SK-N-SH (cell line): ENCODE measurements at regions of chr10 and their contacts with region 1.

Region 1: GRCh38 chr10:78047314-78047891 is 13.7 kb downstream of the RPS24 start:
- DNase-seq: peak; percentile 80
- H3K4me3 ChIP-seq: no peak overlapping the region; a peak in 1 of 4 replicates
- H3K27ac ChIP-seq: peak overlapping the region in 1 of 2 experiments; percentile 70; a peak in 2 of 4 replicates
- H3K4me1 ChIP-seq: peaks cover 22 to 26% of the 10 kb centered on the region in 2 experiments; a peak in 3 of 4 replicates
- H3K27me3 ChIP-seq: no peaks in the 10 kb centered on the region
- CTCF ChIP-seq: peak; percentile 94
- EP300 ChIP-seq: peak in 1 of 2 experiments; percentile 57; a peak in 1 of 4 replicates
- RAD21 ChIP-seq: peak; percentile 100

Region 2: GRCh38 chr10:77970869-77971803 is 76.3 kb before region 1 on chr10:
- CTCF ChIA-PET with region 1: no interaction called
- POLR2A ChIA-PET with region 1: no interaction called
- DNase-seq: peak; percentile 68
- H3K4me3 ChIP-seq: peak overlapping the region in 1 of 2 experiments; percentile 13; a peak in 1 of 4 replicates
- H3K27ac ChIP-seq: peak overlapping the region; percentile 82 to 87
- H3K4me1 ChIP-seq: peaks cover 10 to 16% of the 10 kb centered on the region in 2 experiments; a peak in 3 of 4 replicates
- H3K27me3 ChIP-seq: no peaks in the 10 kb centered on the region
- CTCF ChIP-seq: no peak
- EP300 ChIP-seq: peak; percentile 36 to 38; a peak in 2 of 4 replicates
- RAD21 ChIP-seq: peak; percentile 23

Region 3: DNA sequence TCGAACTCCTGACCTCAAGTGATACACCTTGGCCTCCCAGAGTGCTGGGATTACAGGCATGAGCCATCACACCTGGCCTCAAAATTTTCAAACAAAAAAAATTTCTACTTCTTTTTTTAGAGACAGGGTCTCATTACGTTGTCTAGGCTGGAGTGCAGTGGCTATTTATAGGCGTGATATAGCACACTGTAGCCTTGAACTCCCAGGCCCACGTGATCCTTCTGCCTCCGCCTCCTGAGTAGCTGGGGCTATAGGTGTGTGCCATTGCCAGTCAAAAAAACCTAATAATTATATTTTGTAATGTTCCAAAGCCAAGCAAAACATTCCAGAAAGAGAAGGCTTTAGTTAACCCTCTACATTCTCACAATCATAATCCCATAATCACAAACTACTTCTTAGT is 31.9 kb before region 1 on chr10:
- CTCF ChIA-PET with region 1: no interaction called
- POLR2A ChIA-PET with region 1: no interaction called
- DNase-seq: no peak
- H3K4me3 ChIP-seq: no peak overlapping the region
- H3K27ac ChIP-seq: no peak overlapping the region
- H3K4me1 ChIP-seq: no peaks in the 10 kb centered on the region
- H3K27me3 ChIP-seq: no peaks in the 10 kb centered on the region
- CTCF ChIP-seq: no peak
- EP300 ChIP-seq: no peak
- RAD21 ChIP-seq: no peak

Region 4: GRCh38 chr10:78071140-78071856 is 23.9 kb after region 1 on chr10:
- CTCF ChIA-PET with region 1: interaction called, 19 read pairs
- POLR2A ChIA-PET with region 1: no interaction called
- DNase-seq: no peak
- H3K4me3 ChIP-seq: no peak overlapping the region
- H3K27ac ChIP-seq: no peak overlapping the region
- H3K4me1 ChIP-seq: no peaks in the 10 kb centered on the region
- H3K27me3 ChIP-seq: no peaks in the 10 kb centered on the region
- CTCF ChIP-seq: no peak
- EP300 ChIP-seq: no peak
- RAD21 ChIP-seq: no peak

Region 5: DNA sequence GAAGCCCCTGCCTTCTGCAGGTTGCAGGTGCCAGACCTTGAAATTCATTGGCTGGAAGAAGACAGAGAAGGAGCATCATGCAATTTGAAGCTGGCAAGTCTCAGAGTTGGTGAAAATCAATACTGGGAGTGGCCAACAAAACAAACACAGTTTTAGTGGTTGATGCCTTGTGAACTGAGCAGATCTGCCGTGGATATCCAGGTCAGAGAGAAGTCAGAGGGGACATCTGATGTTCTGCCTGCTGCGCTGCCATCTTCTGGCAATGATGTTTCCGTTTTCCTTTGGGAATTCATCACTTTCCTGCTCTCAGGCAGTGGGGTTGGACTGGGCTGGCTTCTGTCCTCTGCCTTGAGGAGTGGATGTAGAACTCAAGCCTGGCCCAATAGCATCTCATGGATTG is 118.2 kb after region 1 on chr10:
- CTCF ChIA-PET with region 1: interaction called, 122 read pairs
- POLR2A ChIA-PET with region 1: no interaction called
- DNase-seq: peak; percentile 53
- H3K4me3 ChIP-seq: no peak overlapping the region
- H3K27ac ChIP-seq: no peak overlapping the region
- H3K4me1 ChIP-seq: peaks cover 6% of the 10 kb centered on the region in 2 experiments; a peak in 2 of 4 replicates
- H3K27me3 ChIP-seq: no peaks in the 10 kb centered on the region
- CTCF ChIP-seq: peak; percentile 30
- EP300 ChIP-seq: no peak
- RAD21 ChIP-seq: peak; percentile 74

Region 6: GRCh38 chr10:78211561-78212051 is 164.2 kb after region 1 on chr10:
- CTCF ChIA-PET with region 1: interaction called, 42 read pairs
- POLR2A ChIA-PET with region 1: no interaction called
- DNase-seq: peak; percentile 71
- H3K4me3 ChIP-seq: no peak overlapping the region
- H3K27ac ChIP-seq: peak overlapping the region in 1 of 2 experiments; percentile 87; a peak in 2 of 4 replicates
- H3K4me1 ChIP-seq: peaks cover 19 to 64% of the 10 kb centered on the region in 2 experiments; a peak in 3 of 4 replicates
- H3K27me3 ChIP-seq: no peaks in the 10 kb centered on the region
- CTCF ChIP-seq: peak; percentile 89
- EP300 ChIP-seq: no peak
- RAD21 ChIP-seq: peak; percentile 90

Region 7: GRCh38 chr10:78302989-78303854 is 255.8 kb after region 1 on chr10:
- CTCF ChIA-PET with region 1: interaction called, 30 read pairs
- POLR2A ChIA-PET with region 1: interaction called, 6 read pairs
- DNase-seq: peak; percentile 99
- H3K4me3 ChIP-seq: peak overlapping the region; percentile 51 to 72
- H3K27ac ChIP-seq: peak overlapping the region; percentile 71 to 99
- H3K4me1 ChIP-seq: peaks cover 15 to 41% of the 10 kb centered on the region in 2 experiments; a peak in 3 of 4 replicates
- H3K27me3 ChIP-seq: no peaks in the 10 kb centered on the region
- CTCF ChIP-seq: peak; percentile 66
- EP300 ChIP-seq: peak; percentile 70 to 79; a peak in 3 of 4 replicates
- RAD21 ChIP-seq: peak; percentile 73

Region 8: DNA sequence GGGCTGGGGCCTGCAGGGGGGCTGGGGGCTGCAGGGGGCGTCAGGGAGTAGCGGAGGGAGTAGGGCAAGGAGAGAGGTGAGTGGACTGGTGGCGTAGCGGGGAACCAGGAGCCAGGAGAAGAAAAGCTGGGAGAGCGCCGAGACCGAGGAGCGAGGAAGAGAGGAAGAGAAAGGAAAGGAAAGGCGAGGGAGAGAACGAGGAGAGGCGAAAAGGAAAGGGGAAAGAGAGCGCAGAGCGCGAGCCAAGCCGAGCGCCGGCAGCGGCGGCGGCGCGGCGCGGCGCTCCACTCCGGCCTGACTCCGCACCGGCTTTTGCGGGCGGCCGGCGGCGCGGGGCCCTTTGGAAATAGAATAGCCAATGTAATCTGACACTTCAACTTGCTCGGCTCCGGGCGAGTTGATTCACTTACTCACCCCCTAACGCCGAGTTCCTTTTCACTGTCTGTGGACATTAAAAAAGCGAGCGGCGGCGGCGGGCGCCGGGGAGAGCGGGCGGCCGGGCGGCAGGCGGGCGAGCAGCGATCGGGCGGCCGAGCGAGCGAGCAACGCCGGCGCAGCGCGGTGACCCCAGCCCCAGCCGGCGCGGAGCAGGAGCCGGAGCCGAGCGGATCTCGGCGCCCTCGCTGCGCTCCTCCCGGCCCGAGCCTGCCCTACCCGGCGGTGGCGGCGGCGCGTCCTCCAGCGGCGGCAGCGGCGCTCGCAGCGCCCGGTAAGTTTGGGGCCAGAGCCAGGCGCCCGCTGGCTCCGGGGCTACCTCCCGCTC is 1021.3 kb after region 1 on chr10 and contains the start of gene ZMIZ1:
- CTCF ChIA-PET with region 1: interaction called, 14 read pairs
- POLR2A ChIA-PET with region 1: interaction called, 3 read pairs
- DNase-seq: peak; percentile 88
- H3K4me3 ChIP-seq: peak within 1 kb of the TSS; percentile 93 to 99
- H3K27ac ChIP-seq: peak within 1 kb of the TSS; percentile 88 to 97
- H3K4me1 ChIP-seq: peaks cover 9 to 43% of the 10 kb centered on the region in 2 experiments
- H3K27me3 ChIP-seq: no peaks in the 10 kb centered on the region
- CTCF ChIP-seq: 0 out of 2 replicates have a peak, but pooled peaks have one; percentile 1
- EP300 ChIP-seq: peak in 1 of 2 experiments; percentile 32; a peak in 1 of 4 replicates
- RAD21 ChIP-seq: peak; percentile 29
- polyA plus RNA-seq, gene ZMIZ1: 6.6 and 23.5 TPM in 2 replicates